CD4-positive, alpha-beta T cell (primary cell): ENCODE measurements at regions of chr17 and their contacts with region 1.

Region 1: DNA sequence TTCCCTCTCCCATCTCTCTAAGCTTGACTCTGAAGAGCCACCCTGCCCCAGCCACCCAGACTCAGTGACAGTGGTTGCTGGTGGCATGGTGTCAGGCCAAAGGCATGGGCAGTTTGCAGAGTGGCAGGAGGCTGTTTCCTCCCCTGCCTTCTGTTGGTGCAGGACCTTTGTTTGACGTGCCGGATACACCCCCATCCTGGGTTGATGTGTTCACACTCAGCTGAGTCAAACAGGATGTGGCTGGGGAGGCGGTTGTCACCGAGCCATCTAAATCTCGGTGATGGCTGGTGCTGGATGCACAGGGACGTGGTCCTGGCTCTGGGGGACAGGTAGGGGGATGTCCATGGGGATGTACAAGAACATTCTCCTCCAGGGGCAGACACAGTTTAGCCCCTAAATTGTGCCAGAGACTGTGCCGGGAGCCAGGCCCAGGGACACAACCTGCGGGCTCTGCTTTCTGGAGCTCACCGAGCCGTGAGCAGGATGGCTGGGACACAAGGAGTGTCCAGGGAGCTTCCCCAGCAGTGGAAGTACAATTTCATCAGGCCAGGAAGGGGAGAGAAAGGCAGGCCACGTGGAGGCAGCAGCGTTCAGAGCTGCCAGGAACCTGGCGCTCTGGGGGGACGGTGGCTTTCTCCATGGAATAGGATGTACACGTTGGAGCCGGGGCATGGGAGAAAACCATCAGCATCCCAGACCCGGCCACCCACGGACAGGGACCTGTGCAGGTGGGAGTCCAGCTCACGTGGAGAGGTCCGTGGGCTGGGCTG is 264.2 kb downstream of the SEC14L1 start:
- DNase-seq: peak; percentile 66 to 94 (median 81)
- ATAC-seq: peak; percentile 80
- H3K4me3 ChIP-seq: peak overlapping the region; percentile 82
- H3K4me3 Mint-ChIP-seq: peak overlapping the region; percentile 91
- H3K27ac ChIP-seq: peak overlapping the region; percentile 86 to 92
- H3K27ac Mint-ChIP-seq: peak overlapping the region; percentile 96
- H3K4me1 ChIP-seq: peaks cover 99% of the 10 kb centered on the region
- H3K4me1 Mint-ChIP-seq: peaks cover 92% of the 10 kb centered on the region
- H3K27me3 ChIP-seq: no peaks in the 10 kb centered on the region
- H3K27me3 Mint-ChIP-seq: no peaks in the 10 kb centered on the region
- CTCF ChIP-seq: no peak

Region 2: GRCh38 chr17:77331301-77331864 is 73.6 kb before region 1 on chr17:
- CTCF ChIA-PET with region 1: interaction called, 51 read pairs
- POLR2A ChIA-PET with region 1: interaction called, 21 read pairs
- intact Hi-C with region 1: loop called (anchors 1 kb)
- DNase-seq: peak; percentile 92 to 99 (median 98)
- ATAC-seq: peak; percentile 84
- H3K4me3 ChIP-seq: peak overlapping the region; percentile 51
- H3K4me3 Mint-ChIP-seq: peak overlapping the region; percentile 90
- H3K27ac ChIP-seq: peak overlapping the region; percentile 47 to 55
- H3K27ac Mint-ChIP-seq: peak overlapping the region; percentile 88
- H3K4me1 ChIP-seq: peaks cover 52% of the 10 kb centered on the region
- H3K4me1 Mint-ChIP-seq: peaks cover 59% of the 10 kb centered on the region
- H3K27me3 ChIP-seq: no peaks in the 10 kb centered on the region
- H3K27me3 Mint-ChIP-seq: no peaks in the 10 kb centered on the region
- CTCF ChIP-seq: peak; percentile 92

Region 3: GRCh38 chr17:77391668-77392375 is 13.2 kb before region 1 on chr17:
- CTCF ChIA-PET with region 1: interaction called, 21 read pairs
- POLR2A ChIA-PET with region 1: interaction called, 74 read pairs
- intact Hi-C with region 1: loop called in 1 of 2 experiments (anchors 2 kb)
- DNase-seq: peak in 10 of 14 experiments; percentile 33 to 76 (median 53)
- ATAC-seq: peak; percentile 41
- H3K4me3 ChIP-seq: peak overlapping the region; percentile 19
- H3K4me3 Mint-ChIP-seq: peak overlapping the region; percentile 65
- H3K27ac ChIP-seq: peak overlapping the region; percentile 31
- H3K27ac Mint-ChIP-seq: peak overlapping the region; percentile 90
- H3K4me1 ChIP-seq: peaks cover 91% of the 10 kb centered on the region
- H3K4me1 Mint-ChIP-seq: peaks cover 88% of the 10 kb centered on the region
- H3K27me3 ChIP-seq: no peaks in the 10 kb centered on the region
- H3K27me3 Mint-ChIP-seq: no peaks in the 10 kb centered on the region
- CTCF ChIP-seq: no peak

Region 4: GRCh38 chr17:77437017-77437416 is 32.0 kb after region 1 on chr17:
- CTCF ChIA-PET with region 1: interaction called, 32 read pairs
- POLR2A ChIA-PET with region 1: interaction called, 368 read pairs
- intact Hi-C with region 1: no loop called
- DNase-seq: peak in 5 of 14 experiments; percentile 34 to 68 (median 67)
- ATAC-seq: no peak
- H3K4me3 ChIP-seq: peak overlapping the region; percentile 55
- H3K4me3 Mint-ChIP-seq: peak overlapping the region; percentile 96
- H3K27ac ChIP-seq: peak overlapping the region; percentile 79 to 98
- H3K27ac Mint-ChIP-seq: peak overlapping the region; percentile 93
- H3K4me1 ChIP-seq: peaks cover 100% of the 10 kb centered on the region
- H3K4me1 Mint-ChIP-seq: peaks cover 97% of the 10 kb centered on the region
- H3K27me3 ChIP-seq: no peaks in the 10 kb centered on the region
- H3K27me3 Mint-ChIP-seq: no peaks in the 10 kb centered on the region
- CTCF ChIP-seq: no peak

Region 5: GRCh38 chr17:77456951-77457548 is 52.1 kb after region 1 on chr17:
- CTCF ChIA-PET with region 1: interaction called, 12 read pairs
- POLR2A ChIA-PET with region 1: interaction called, 32 read pairs
- intact Hi-C with region 1: no loop called
- DNase-seq: peak in 4 of 14 experiments; percentile 47 to 68 (median 60)
- ATAC-seq: peak; percentile 7
- H3K4me3 ChIP-seq: peak overlapping the region; percentile 94
- H3K4me3 Mint-ChIP-seq: peak overlapping the region; percentile 98
- H3K27ac ChIP-seq: peak overlapping the region; percentile 83 to 90
- H3K27ac Mint-ChIP-seq: peak overlapping the region; percentile 93
- H3K4me1 ChIP-seq: peaks cover 93% of the 10 kb centered on the region
- H3K4me1 Mint-ChIP-seq: peaks cover 72% of the 10 kb centered on the region
- H3K27me3 ChIP-seq: no peaks in the 10 kb centered on the region
- H3K27me3 Mint-ChIP-seq: no peaks in the 10 kb centered on the region
- CTCF ChIP-seq: no peak

Region 6: GRCh38 chr17:77476931-77477877 is 72.2 kb after region 1 on chr17:
- CTCF ChIA-PET with region 1: interaction called, 12 read pairs
- POLR2A ChIA-PET with region 1: interaction called, 9 read pairs
- intact Hi-C with region 1: loop called in 1 of 2 experiments (anchors 5 kb)
- DNase-seq: peak in 2 of 14 experiments; percentile 47 to 48
- ATAC-seq: peak; percentile 33
- H3K4me3 ChIP-seq: no peak overlapping the region
- H3K4me3 Mint-ChIP-seq: peak overlapping the region; percentile 74
- H3K27ac ChIP-seq: peak overlapping the region; percentile 58 to 75
- H3K27ac Mint-ChIP-seq: peak overlapping the region; percentile 97
- H3K4me1 ChIP-seq: peaks cover 98% of the 10 kb centered on the region
- H3K4me1 Mint-ChIP-seq: peaks cover 79% of the 10 kb centered on the region
- H3K27me3 ChIP-seq: no peaks in the 10 kb centered on the region
- H3K27me3 Mint-ChIP-seq: no peaks in the 10 kb centered on the region
- CTCF ChIP-seq: no peak